ENCODE measurements at regions of chr6 and their contacts with region 1.

Region 1: DNA sequence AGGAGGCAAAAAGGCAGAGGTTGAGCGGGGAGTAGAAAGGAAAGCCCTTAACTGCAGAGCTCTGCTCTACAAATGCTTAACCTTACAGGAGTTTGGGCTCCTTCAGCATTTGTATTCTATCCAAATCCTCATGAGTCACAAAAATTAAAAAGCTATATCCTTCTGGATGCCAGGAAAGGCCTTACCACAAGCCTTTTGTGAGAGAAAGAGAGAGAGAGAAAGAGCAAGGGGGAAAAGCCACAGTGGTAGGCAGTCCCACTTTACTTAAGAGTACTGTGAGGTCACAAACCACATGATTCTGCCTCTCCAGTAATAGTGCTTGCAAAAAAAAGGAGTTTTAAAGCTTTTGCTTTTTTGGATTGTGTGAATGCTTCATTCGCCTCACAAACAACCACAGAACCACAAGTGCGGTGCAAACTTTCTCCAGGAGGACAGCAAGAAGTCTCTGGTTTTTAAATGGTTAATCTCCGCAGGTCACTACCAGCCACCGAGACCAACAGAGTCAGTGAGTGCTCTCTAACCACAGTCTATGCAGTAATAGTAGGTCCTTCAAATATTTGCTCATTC is at the start of gene RUNX2:
- DNase-seq: no peak
- total RNA-seq, gene RUNX2: 3.1 TPM

Region 2: DNA sequence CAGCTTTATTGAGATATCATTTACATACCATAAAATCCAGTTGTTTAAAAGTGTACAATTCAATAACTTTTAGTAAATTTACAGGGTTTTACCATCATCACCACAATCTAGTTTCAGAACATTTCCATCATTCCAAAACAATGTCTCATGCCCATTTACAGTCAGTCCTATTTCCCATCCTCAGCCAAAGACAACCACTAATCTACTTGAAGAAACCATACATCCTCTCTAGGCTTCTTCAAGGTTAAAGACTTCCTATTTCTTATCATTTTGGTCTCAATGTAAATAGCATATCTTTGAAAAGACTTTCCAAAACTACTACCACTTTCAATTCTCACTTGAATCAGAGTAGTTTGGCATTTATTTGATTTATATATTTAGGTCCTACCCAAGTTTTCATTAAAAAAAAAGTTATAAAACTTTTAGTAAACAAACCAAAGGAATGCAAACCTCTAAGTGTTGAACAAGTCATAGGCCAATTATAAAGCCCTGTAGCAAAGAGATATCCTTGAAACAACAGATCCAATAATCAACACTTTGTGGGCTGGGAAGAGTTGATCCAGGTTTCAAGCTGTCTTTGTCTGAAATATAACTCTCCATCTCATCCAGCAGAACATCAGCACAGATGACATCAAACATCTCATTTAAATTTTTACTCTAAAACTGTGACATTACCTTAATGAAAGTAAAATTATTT is 211.2 kb before region 1 on chr6:
- intact Hi-C with region 1: loop called (anchors 5 kb)
- DNase-seq: no peak